IMR-90 (cell line): ENCODE measurements at regions of chr12 and their contacts with region 1.

Region 1: GRCh38 chr12:71840231-71840847 is 780 bp downstream of the TBC1D15 start:
- DNase-seq: peak; percentile 88
- ATAC-seq: peak; percentile 62
- H3K4me3 ChIP-seq: peak overlapping the region; percentile 74
- H3K27ac ChIP-seq: peak overlapping the region; percentile 78
- H3K4me1 ChIP-seq: no peaks in the 10 kb centered on the region
- H3K27me3 ChIP-seq: no peaks in the 10 kb centered on the region
- CTCF ChIP-seq: no peak
- POLR2A ChIP-seq: peak; percentile 55; the same call in 1 of the 2 replicates
- RAD21 ChIP-seq: no peak

Region 2: DNA sequence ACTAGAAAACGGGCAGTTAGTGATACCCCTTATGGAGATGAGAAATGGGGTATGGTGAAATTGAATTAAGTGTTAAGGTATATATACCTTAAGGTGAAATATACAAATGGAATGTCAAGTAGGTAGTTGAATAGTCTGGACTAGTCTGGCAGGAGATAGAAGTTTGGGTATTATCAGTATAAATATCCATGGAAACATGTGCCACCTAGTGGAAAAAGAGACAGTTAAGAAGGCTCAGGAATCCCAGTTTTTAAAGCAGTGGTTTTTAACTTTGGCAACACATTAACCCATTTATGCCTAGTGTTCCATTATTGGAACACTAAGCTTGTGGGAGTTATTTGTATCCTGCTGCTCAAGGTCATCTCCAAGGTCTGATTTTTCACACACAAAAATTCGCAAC is 59.8 kb after region 1 on chr12:
- CTCF ChIA-PET with region 1: no interaction called
- POLR2A ChIA-PET with region 1: no interaction called
- dilution Hi-C with region 1: no loop called
- in situ Hi-C with region 1: no loop called
- intact Hi-C with region 1: loop called (anchors 2 kb)
- DNase-seq: peak; percentile 20
- ATAC-seq: peak; percentile 76
- H3K4me3 ChIP-seq: no peak overlapping the region
- H3K27ac ChIP-seq: no peak overlapping the region
- H3K4me1 ChIP-seq: peaks cover 6% of the 10 kb centered on the region; the same call in 1 of the 2 replicates
- H3K27me3 ChIP-seq: no peaks in the 10 kb centered on the region
- CTCF ChIP-seq: peak; percentile 42
- POLR2A ChIP-seq: no peak
- RAD21 ChIP-seq: peak; percentile 43